ENCODE measurements at regions of chr22 and their contacts with region 1.

Region 1: GRCh38 chr22:39319270-39320022 is at the start of gene RPL3:
- DNase-seq: peak; percentile 99
- ATAC-seq: peak; percentile 76
- H3K4me3 ChIP-seq: peak within 1 kb of the TSS; percentile 86 to 99
- H3K27ac ChIP-seq: peak within 1 kb of the TSS; percentile 100
- H3K4me1 ChIP-seq: peaks cover 36 to 51% of the 10 kb centered on the region in 2 experiments
- H3K27me3 ChIP-seq: no peaks in the 10 kb centered on the region
- CTCF ChIP-seq: no peak
- POLR2A ChIP-seq: peak; percentile 99
- RAD21 ChIP-seq: no peak
- total RNA-seq, gene RPL3: 2,966 TPM

Region 2: DNA sequence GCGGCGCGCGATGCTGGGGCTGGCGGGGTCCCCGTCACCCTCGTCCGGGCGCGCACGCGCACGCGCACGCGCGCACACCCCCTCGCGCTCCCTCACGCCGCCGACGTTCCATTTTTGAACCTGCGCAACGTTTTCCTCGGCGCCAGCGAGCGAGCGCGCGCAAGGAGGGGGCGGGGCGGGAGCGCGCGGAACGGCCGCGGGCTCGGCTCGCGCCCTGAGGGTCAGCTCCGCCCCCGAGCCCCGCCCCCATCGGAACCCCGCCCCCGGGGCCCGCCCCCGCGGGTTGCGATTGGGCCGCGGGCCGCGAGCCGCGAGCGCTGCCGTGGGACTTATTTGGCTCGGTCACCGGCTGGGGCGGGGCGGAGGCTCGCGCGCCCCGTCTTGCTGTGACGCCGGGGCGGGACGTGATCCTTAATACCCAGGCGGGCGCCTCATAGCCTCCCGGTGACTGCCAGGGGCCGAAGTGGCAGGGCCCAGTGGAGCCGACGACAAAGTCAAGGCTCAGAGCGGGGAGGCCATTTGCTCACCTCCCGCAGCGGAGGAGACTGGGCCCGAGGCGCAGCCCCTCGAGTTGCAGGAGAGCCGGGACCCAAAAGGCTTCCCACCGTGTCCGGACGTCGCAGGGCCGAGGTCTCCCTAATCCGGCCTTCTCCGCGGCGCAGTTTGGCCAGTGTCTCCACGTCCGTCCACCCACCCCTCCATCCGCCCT is 166.8 kb before region 1 on chr22 and contains the start of gene CBX7:
- CTCF ChIA-PET with region 1: no interaction called
- POLR2A ChIA-PET with region 1: interaction called, 11 read pairs
- RAD21 ChIA-PET with region 1: no interaction called
- intact Hi-C with region 1: no loop called
- DNase-seq: peak; percentile 74
- ATAC-seq: peak; percentile 93
- H3K4me3 ChIP-seq: peak within 1 kb of the TSS; percentile 67 to 71
- H3K27ac ChIP-seq: peak within 1 kb of the TSS; percentile 70
- H3K4me1 ChIP-seq: peaks cover 7 to 20% of the 10 kb centered on the region in 2 experiments
- H3K27me3 ChIP-seq: no peaks in the 10 kb centered on the region
- CTCF ChIP-seq: no peak
- POLR2A ChIP-seq: no peak
- RAD21 ChIP-seq: no peak
- total RNA-seq, gene CBX7: 20.1 TPM

Region 3: DNA sequence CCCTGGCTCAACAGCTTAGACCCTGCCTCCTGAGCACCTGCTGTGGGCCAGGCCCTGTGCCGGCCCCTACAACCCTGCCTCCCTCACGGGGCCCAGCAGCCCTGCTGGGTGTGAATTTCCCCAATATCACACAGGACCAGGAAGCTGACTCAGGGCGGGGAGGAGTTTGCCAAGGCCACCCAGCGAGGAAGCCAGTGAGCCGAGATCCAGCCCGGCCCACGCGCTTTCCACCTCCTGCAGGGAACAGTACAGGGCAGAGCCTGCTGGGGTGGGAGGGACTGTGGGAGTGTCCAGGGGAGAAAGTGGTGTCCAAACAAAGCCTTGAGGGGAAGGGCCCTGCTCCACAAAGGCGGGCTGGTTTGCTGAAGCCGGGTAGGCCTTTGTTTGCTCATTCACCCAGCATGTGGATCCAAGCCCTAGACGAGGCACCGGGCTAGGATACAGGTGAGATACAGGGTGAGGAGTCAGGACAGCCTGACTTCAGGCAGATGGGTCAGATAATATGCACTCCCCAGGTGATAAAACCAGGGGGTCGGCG is 26.8 kb before region 1 on chr22:
- CTCF ChIA-PET with region 1: interaction called, 5 read pairs
- POLR2A ChIA-PET with region 1: interaction called, 20 read pairs
- RAD21 ChIA-PET with region 1: no interaction called
- intact Hi-C with region 1: no loop called
- DNase-seq: peak; percentile 93
- ATAC-seq: peak; percentile 82
- H3K4me3 ChIP-seq: peak overlapping the region; percentile 18 to 41
- H3K27ac ChIP-seq: peak overlapping the region; percentile 98
- H3K4me1 ChIP-seq: peaks cover 61 to 95% of the 10 kb centered on the region in 2 experiments
- H3K27me3 ChIP-seq: no peaks in the 10 kb centered on the region
- CTCF ChIP-seq: no peak
- POLR2A ChIP-seq: peak; percentile 86
- RAD21 ChIP-seq: no peak

Region 4: GRCh38 chr22:39306581-39307361 is 12.7 kb before region 1 on chr22:
- CTCF ChIA-PET with region 1: interaction called, 3 read pairs
- POLR2A ChIA-PET with region 1: interaction called, 54 read pairs
- RAD21 ChIA-PET with region 1: no interaction called
- intact Hi-C with region 1: no loop called
- DNase-seq: no peak
- ATAC-seq: no peak
- H3K4me3 ChIP-seq: no peak overlapping the region
- H3K27ac ChIP-seq: no peak overlapping the region
- H3K4me1 ChIP-seq: peaks cover 52 to 64% of the 10 kb centered on the region in 2 experiments
- H3K27me3 ChIP-seq: no peaks in the 10 kb centered on the region
- CTCF ChIP-seq: peak in 2 of 3 experiments; percentile 53 to 75; a peak in 4 of 6 replicates
- POLR2A ChIP-seq: no peak
- RAD21 ChIP-seq: no peak

Region 5: DNA sequence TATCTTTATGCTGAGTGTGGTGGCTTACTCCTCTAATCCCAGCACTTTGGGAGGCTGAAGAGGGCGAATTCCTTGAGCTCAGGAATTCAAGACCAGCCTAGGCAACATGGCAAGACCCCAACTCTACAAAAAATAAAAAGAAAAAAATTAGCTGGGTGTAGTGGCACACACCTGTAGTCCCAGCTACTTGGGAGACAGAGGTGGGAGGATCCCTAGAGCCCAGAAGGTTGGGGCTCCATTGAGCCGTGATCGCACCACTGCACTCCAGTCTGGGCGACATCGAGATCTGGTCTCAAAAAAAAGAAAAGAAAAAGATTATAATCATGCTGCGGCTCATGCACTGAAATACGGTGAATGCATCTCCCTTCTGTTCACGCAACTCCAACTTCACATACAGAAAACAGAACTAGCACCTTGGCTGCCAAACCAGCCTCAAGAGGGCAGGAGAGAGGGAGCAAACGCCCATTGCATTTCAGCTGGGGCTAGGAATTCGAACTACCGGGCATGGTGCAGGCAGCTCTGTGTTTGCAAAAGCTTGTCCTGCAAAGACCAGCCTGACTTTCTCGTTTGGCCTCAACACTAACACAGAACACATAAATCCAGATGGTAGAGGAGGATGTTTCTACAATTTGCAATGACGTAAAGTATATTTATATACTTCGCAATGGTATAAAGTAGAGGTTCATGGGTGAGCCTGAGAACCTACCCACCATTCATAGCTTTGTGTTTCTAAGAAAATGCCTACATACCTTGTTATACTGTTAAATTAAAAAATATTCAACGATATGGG is 24.0 kb after region 1 on chr22:
- CTCF ChIA-PET with region 1: interaction called, 6 read pairs
- POLR2A ChIA-PET with region 1: interaction called, 35 read pairs
- RAD21 ChIA-PET with region 1: no interaction called
- intact Hi-C with region 1: no loop called
- DNase-seq: peak; percentile 36
- ATAC-seq: peak; percentile 97
- H3K4me3 ChIP-seq: peak overlapping the region in 1 of 2 experiments; percentile 37; a peak in 1 of 4 replicates
- H3K27ac ChIP-seq: no peak overlapping the region
- H3K4me1 ChIP-seq: peaks cover 12% of the 10 kb centered on the region in 2 experiments; a peak in 3 of 4 replicates
- H3K27me3 ChIP-seq: no peaks in the 10 kb centered on the region
- CTCF ChIP-seq: peak; percentile 64 to 93 (median 81)
- POLR2A ChIP-seq: no peak
- RAD21 ChIP-seq: peak; percentile 62

Region 6: GRCh38 chr22:39502109-39502788 is 182.8 kb after region 1 on chr22 and contains the start of gene MIEF1:
- CTCF ChIA-PET with region 1: interaction called, 3 read pairs
- POLR2A ChIA-PET with region 1: interaction called, 10 read pairs
- RAD21 ChIA-PET with region 1: no interaction called
- intact Hi-C with region 1: no loop called
- DNase-seq: peak; percentile 94
- ATAC-seq: peak; percentile 93
- H3K4me3 ChIP-seq: peak within 1 kb of the TSS; percentile 92 to 97
- H3K27ac ChIP-seq: peak within 1 kb of the TSS; percentile 70
- H3K4me1 ChIP-seq: peaks cover 16 to 29% of the 10 kb centered on the region in 2 experiments
- H3K27me3 ChIP-seq: no peaks in the 10 kb centered on the region
- CTCF ChIP-seq: no peak
- POLR2A ChIP-seq: peak; percentile 65
- RAD21 ChIP-seq: no peak
- total RNA-seq, gene MIEF1: 42.8 TPM